ENCODE measurements at regions of chr18 and their contacts with region 1.

Region 1: DNA sequence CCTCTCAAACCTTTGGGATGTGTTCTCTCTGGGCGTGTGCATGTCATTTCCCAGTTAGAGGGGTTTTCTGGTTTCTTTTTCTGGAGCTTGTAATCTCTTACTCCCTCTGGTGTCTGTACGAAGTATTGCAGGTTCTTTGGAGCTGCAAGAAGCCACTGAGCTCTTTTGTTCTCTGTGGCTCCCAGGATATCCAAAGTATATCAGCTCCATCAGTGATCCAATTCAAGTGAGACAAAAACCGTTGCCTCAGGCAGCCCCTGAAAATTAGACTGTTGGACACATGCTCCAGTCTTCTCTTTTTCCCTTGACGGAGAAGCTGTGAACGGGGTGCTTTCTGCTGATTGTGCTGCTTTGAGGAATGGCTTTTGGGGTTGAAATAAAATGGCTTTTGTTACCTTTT is 59.0 kb upstream of the LDLRAD4 start:
- DNase-seq: peak; percentile 58
- H3K4me3 ChIP-seq: no peak overlapping the region
- H3K27ac ChIP-seq: no peak overlapping the region
- H3K4me1 ChIP-seq: no peaks in the 10 kb centered on the region
- H3K27me3 ChIP-seq: peaks cover 0 to 6% of the 10 kb centered on the region in 2 experiments
- CTCF ChIP-seq: peak; percentile 67 to 77
- POLR2A ChIP-seq: no peak

Region 2: GRCh38 chr18:12726774-12727550 is 432.6 kb before region 1 on chr18:
- CTCF ChIA-PET with region 1: interaction called, 22 read pairs
- POLR2A ChIA-PET with region 1: no interaction called
- dilution Hi-C with region 1: no loop called
- intact Hi-C with region 1: loop called (anchors 2 kb)
- DNase-seq: peak; percentile 81
- H3K4me3 ChIP-seq: no peak overlapping the region
- H3K27ac ChIP-seq: no peak overlapping the region
- H3K4me1 ChIP-seq: no peaks in the 10 kb centered on the region
- H3K27me3 ChIP-seq: no peaks in the 10 kb centered on the region
- CTCF ChIP-seq: peak; percentile 76 to 80
- POLR2A ChIP-seq: no peak

Region 3: GRCh38 chr18:13003466-13003896 is 156.1 kb before region 1 on chr18:
- CTCF ChIA-PET with region 1: interaction called, 21 read pairs
- POLR2A ChIA-PET with region 1: no interaction called
- dilution Hi-C with region 1: no loop called
- intact Hi-C with region 1: no loop called
- DNase-seq: peak; percentile 61
- H3K4me3 ChIP-seq: no peak overlapping the region
- H3K27ac ChIP-seq: no peak overlapping the region
- H3K4me1 ChIP-seq: no peaks in the 10 kb centered on the region
- H3K27me3 ChIP-seq: no peaks in the 10 kb centered on the region
- CTCF ChIP-seq: peak; percentile 52 to 56
- POLR2A ChIP-seq: no peak

Region 4: GRCh38 chr18:13124411-13124810 is 35.2 kb before region 1 on chr18:
- CTCF ChIA-PET with region 1: interaction called, 12 read pairs
- POLR2A ChIA-PET with region 1: no interaction called
- dilution Hi-C with region 1: no loop called
- intact Hi-C with region 1: no loop called
- DNase-seq: no peak
- H3K4me3 ChIP-seq: no peak overlapping the region
- H3K27ac ChIP-seq: no peak overlapping the region
- H3K4me1 ChIP-seq: no peaks in the 10 kb centered on the region
- H3K27me3 ChIP-seq: no peaks in the 10 kb centered on the region
- CTCF ChIP-seq: no peak
- POLR2A ChIP-seq: no peak

Region 5: DNA sequence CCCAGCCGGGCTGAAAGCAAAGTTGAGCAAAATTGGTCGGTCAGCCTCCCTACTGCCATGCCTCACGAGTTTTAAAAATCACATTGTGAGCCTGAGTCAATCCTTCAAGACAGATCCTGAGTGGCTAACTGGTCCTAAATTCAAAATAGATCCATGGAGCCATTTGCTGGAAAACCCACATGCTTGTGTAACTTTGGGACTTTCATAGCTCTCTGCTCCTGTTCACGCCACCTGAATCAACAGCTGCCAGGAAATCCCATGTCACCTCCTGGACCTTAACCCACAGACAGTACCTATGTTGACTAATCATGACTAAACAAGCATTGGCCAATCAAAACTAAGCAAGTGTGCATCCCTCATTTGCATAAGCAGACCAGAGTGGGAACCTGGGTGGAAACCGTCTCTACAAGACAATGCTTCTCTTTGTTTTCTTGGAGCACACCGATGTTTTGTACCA is 16.2 kb after region 1 on chr18:
- CTCF ChIA-PET with region 1: interaction called, 16 read pairs
- POLR2A ChIA-PET with region 1: no interaction called
- dilution Hi-C with region 1: no loop called
- intact Hi-C with region 1: no loop called
- DNase-seq: peak; percentile 4
- H3K4me3 ChIP-seq: no peak overlapping the region
- H3K27ac ChIP-seq: no peak overlapping the region
- H3K4me1 ChIP-seq: no peaks in the 10 kb centered on the region
- H3K27me3 ChIP-seq: peaks cover 0 to 6% of the 10 kb centered on the region in 2 experiments
- CTCF ChIP-seq: no peak
- POLR2A ChIP-seq: no peak

Region 6: GRCh38 chr18:13245481-13246000 is 86.0 kb after region 1 on chr18:
- CTCF ChIA-PET with region 1: no interaction called
- POLR2A ChIA-PET with region 1: no interaction called
- dilution Hi-C with region 1: no loop called
- intact Hi-C with region 1: no loop called
- DNase-seq: no peak
- H3K4me3 ChIP-seq: no peak overlapping the region
- H3K27ac ChIP-seq: no peak overlapping the region
- H3K4me1 ChIP-seq: no peaks in the 10 kb centered on the region
- H3K27me3 ChIP-seq: peaks cover 0 to 3% of the 10 kb centered on the region in 2 experiments
- CTCF ChIP-seq: no peak
- POLR2A ChIP-seq: no peak

Region 7: DNA sequence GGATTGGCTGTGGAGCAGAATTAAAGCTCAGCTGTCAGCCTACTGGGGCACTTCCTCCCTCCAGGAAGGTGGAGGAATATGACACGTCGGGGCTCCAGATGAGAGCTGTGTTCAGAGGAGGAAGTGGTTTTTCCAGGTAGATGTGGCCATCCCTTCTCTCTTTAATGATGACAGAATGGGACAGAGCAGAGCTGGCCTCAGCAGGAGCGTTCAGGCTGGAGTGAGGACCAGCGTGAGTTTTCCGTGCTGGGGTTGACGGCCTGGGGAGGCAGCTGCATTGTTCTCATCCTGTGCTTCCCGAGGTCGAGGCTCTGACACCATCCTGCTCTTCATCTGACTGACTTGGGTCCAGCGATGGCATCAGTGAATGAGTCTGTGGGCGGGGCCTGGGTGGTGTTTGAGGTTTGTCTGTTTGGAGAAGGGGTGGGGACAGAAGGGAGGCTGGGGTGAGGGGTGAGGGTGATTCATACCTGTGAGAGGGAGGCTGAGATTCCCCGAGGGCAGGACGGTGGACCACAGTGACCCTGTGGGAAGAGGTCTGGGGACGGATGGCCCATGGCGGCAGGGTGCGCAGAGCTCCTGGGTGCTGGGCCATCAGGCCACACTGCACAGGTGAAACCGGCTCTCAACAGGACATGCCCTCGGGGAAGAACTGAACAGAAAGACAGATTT is 266.0 kb after region 1 on chr18:
- CTCF ChIA-PET with region 1: no interaction called
- POLR2A ChIA-PET with region 1: no interaction called
- dilution Hi-C with region 1: no loop called
- intact Hi-C with region 1: no loop called
- DNase-seq: no peak
- H3K4me3 ChIP-seq: no peak overlapping the region
- H3K27ac ChIP-seq: no peak overlapping the region
- H3K4me1 ChIP-seq: peaks cover 3% of the 10 kb centered on the region
- H3K27me3 ChIP-seq: no peaks in the 10 kb centered on the region
- CTCF ChIP-seq: no peak
- POLR2A ChIP-seq: no peak

Region 8: DNA sequence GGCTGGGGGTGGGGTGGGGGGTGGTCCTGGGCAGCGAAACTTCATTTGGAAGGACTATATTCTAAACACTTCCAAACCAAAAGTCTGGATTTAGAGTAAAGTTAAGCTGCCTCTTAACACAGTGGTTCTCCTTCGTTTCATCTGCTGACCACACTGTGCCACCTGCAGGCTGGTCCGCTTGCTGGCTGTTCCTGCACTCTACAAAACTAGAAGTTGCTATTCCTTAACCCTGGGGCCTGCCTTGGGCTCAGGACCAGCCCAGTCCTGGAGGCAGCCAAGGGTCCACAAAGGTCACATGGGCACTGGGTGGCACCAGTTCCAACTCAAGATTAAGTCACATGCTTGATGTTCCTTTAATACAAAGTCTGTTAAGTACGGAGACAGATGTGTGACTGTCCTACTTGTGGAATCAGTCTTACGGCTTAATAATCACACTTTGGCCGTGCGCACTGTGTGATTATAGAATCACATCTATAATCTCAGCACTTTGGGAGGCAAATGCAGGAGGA is 371.4 kb after region 1 on chr18:
- CTCF ChIA-PET with region 1: interaction called, 9 read pairs
- POLR2A ChIA-PET with region 1: no interaction called
- dilution Hi-C with region 1: no loop called
- intact Hi-C with region 1: loop called (anchors 10 kb)
- DNase-seq: peak; percentile 79
- H3K4me3 ChIP-seq: no peak overlapping the region
- H3K27ac ChIP-seq: no peak overlapping the region
- H3K4me1 ChIP-seq: no peaks in the 10 kb centered on the region
- H3K27me3 ChIP-seq: peaks cover 0 to 5% of the 10 kb centered on the region in 2 experiments
- CTCF ChIP-seq: peak; percentile 59 to 75
- POLR2A ChIP-seq: no peak